Activated CD8-positive, alpha-beta T cell treated with anti-CD3 and anti-CD28 coated beads, Interleukin-2, amount 10 ng/mL, durations not matched to agents 7 days and 5 days (primary cell): ENCODE measurements at regions of chr15 and their contacts with region 1.

Region 1: DNA sequence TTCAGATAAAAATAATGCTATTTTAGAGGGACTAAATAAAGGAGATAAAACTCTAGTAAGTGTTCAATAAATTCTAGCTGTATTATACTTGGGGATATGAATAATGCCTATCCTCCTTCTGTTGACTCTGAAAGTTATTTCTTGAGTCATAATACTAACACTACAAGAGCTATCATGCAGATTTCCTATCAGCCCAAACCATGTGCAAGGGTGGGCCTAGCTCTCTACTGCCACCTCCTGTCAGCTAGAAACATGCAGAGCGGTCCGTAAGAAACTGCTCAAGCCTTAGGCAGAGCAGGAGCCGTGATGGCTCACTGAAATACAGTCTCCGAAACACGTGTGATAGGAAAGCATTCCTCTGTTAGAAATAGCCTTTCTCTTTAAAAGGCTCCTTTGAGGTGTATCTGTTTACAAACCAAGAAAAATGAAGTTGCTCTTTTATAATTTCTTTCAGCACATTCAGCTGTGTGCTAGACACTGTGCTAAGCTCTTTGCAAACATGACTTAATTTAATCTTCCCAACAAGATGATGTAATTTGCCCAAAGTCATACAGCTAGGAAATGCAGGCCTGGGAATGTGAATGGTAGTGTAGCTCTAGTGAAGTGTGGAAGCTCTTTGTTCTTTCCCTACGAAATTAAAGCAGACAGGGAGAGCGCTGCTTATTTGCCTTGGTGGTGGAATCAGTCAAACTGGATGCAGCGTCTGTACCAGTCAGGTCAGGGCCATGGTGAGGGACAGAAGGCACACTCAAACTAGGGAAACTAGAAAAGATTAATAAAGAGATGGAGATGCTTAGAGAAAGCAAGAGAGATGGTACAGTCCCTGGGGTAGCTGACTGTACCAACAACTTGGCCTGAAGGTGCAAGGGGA is 43.1 kb downstream of the MTHFS start:
- DNase-seq: peak; percentile 75
- ATAC-seq: peak; percentile 98
- H3K4me3 Mint-ChIP-seq: no peak overlapping the region
- H3K27ac Mint-ChIP-seq: no peak overlapping the region
- H3K4me1 Mint-ChIP-seq: peaks cover 9% of the 10 kb centered on the region
- H3K27me3 Mint-ChIP-seq: no peaks in the 10 kb centered on the region

Region 2: DNA sequence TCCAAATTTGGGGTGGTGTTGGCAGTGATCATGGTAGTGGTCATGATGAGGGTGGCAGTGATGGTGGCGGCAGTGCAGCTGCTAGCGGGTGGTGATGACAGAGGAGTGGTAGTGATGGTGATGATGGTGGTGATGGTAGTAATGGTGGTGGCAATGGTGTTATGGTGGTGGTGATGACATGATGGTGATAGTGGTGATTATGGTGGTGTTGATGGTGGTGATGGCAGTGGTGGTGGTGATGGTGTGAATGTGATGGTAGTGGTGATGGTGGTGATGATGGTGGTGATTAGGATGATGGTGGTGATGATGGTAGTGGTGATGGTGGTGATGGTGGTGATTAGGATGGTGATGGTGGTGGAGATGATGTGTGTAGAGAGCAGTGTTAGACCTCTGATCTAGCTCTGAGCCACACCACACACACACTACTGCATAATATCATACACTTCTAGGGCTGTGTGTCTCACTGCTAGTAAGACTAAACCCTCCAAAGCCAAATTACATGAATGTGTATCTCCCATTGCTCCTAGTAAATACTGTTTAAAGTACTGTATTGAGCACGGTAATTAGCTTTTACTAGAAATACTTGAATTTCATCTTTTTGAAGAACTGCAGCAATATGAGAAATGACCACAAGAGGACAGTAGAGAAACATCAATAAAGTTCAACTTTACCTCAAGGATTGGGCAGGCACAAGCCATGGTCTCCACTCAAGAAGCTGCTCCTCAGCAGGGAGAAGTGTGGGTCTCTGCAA is 514.0 kb before region 1 on chr15:
- CTCF ChIA-PET with region 1: interaction called, 29 read pairs
- POLR2A ChIA-PET with region 1: no interaction called
- DNase-seq: no peak
- ATAC-seq: no peak
- H3K4me3 Mint-ChIP-seq: no peak overlapping the region
- H3K27ac Mint-ChIP-seq: no peak overlapping the region
- H3K4me1 Mint-ChIP-seq: no peaks in the 10 kb centered on the region
- H3K27me3 Mint-ChIP-seq: no peaks in the 10 kb centered on the region

Region 3: DNA sequence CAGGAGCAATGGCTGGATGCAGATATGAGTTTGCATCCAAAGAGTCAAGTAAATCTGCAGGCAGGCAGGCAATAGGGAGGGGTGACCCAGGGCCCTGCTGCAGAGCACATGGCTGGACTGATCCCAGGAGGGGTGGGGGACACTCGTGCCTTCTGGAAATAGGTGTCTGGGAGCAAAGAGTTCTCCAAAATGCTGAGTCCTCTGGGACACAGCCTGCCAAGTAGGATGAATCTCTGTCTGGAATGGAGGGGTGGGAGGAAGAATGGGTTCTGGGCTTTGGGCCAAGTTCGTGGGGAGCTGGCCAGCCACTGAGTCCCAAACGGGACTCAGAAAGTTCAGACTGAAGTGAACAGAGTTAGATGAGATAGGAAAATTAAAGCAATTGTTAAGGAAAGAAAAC is 171.4 kb before region 1 on chr15:
- CTCF ChIA-PET with region 1: no interaction called
- POLR2A ChIA-PET with region 1: no interaction called
- DNase-seq: no peak
- ATAC-seq: no peak
- H3K4me3 Mint-ChIP-seq: no peak overlapping the region
- H3K27ac Mint-ChIP-seq: no peak overlapping the region
- H3K4me1 Mint-ChIP-seq: no peaks in the 10 kb centered on the region
- H3K27me3 Mint-ChIP-seq: peaks cover 12% of the 10 kb centered on the region

Region 4: DNA sequence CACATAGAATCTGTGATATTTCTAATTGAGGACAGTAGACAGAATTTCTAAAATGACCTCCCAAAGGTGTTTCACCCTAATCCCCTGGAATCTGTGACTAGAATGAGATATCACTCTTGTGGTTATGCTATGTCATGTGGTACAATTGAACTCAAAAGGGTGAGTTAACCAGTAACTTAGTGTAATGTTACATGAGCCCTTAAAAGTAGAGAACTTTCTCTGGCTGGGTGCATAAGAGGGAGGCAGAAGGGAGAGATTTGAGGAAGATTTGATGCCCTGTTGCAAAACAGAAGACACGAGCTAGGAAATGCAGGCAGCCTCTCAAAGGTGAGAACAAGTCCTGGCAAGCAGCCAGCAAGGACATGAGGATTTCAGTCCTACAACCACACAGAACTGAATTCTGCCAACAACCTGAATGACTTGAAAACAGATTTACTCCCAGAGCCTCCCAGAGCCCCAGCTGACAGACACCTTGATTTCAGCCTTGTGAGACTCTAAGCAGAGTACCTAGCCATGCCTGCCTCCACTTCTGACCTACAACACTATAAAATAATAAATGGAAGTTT is 117.2 kb before region 1 on chr15:
- CTCF ChIA-PET with region 1: no interaction called
- POLR2A ChIA-PET with region 1: no interaction called
- DNase-seq: no peak
- ATAC-seq: no peak
- H3K4me3 Mint-ChIP-seq: no peak overlapping the region
- H3K27ac Mint-ChIP-seq: no peak overlapping the region
- H3K4me1 Mint-ChIP-seq: no peaks in the 10 kb centered on the region
- H3K27me3 Mint-ChIP-seq: peaks cover 12% of the 10 kb centered on the region

Region 5: GRCh38 chr15:79769069-79769481 is 84.6 kb before region 1 on chr15:
- CTCF ChIA-PET with region 1: interaction called, 11 read pairs
- POLR2A ChIA-PET with region 1: no interaction called
- DNase-seq: no peak
- ATAC-seq: no peak
- H3K4me3 Mint-ChIP-seq: no peak overlapping the region
- H3K27ac Mint-ChIP-seq: no peak overlapping the region
- H3K4me1 Mint-ChIP-seq: no peaks in the 10 kb centered on the region
- H3K27me3 Mint-ChIP-seq: peaks cover 15% of the 10 kb centered on the region

Region 6: DNA sequence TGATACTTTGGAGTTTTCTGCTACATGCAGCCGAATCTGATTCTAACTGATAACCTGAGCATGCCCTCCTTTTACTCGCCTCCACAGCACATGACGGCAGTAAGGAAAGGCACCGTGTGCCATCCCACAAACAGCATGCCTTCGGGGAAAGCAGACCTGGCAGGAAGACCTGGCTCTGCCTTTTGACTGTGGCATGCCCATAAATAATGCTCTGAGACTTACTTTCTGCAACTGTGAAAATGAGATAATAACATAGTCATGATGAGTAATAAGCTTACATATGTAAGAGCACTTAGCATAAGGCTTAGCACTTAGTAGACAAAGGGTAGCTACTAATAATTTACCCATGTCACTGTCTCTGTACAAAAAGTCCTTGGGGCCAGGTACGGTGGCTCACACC is 10.2 kb after region 1 on chr15:
- CTCF ChIA-PET with region 1: interaction called, 22 read pairs
- POLR2A ChIA-PET with region 1: interaction called, 3 read pairs
- DNase-seq: no peak
- ATAC-seq: no peak
- H3K4me3 Mint-ChIP-seq: no peak overlapping the region
- H3K27ac Mint-ChIP-seq: no peak overlapping the region
- H3K4me1 Mint-ChIP-seq: peaks cover under 1% of the 10 kb centered on the region
- H3K27me3 Mint-ChIP-seq: no peaks in the 10 kb centered on the region

Region 7: GRCh38 chr15:79878078-79878705 is 24.5 kb after region 1 on chr15:
- CTCF ChIA-PET with region 1: interaction called, 35 read pairs
- POLR2A ChIA-PET with region 1: no interaction called
- DNase-seq: no peak
- ATAC-seq: no peak
- H3K4me3 Mint-ChIP-seq: no peak overlapping the region
- H3K27ac Mint-ChIP-seq: no peak overlapping the region
- H3K4me1 Mint-ChIP-seq: peaks cover 9% of the 10 kb centered on the region
- H3K27me3 Mint-ChIP-seq: no peaks in the 10 kb centered on the region

Region 8: DNA sequence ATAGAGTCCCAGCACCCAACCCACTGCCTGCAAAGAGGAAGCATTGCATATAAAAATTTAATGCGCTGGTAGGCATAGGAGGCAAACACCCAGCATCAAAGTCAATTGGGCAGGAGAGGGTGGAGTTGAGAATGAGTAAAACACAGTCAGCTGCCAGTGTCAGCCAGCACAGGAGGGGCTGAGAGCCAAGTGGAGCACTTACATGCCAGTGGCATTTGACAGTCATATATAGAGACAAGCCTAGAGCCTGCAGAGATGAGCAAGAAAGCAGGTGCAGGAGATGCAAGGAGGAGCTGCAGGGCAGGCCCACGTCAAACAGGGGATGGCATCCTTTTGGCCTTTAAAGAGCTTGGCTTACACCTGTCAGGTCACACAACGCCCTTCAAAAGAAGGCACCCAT is 178.1 kb after region 1 on chr15:
- CTCF ChIA-PET with region 1: interaction called, 10 read pairs
- POLR2A ChIA-PET with region 1: no interaction called
- DNase-seq: no peak
- ATAC-seq: no peak
- H3K4me3 Mint-ChIP-seq: no peak overlapping the region
- H3K27ac Mint-ChIP-seq: peak overlapping the region; percentile 40
- H3K4me1 Mint-ChIP-seq: peaks cover 22% of the 10 kb centered on the region
- H3K27me3 Mint-ChIP-seq: peaks cover 7% of the 10 kb centered on the region